ENCODE measurements at regions of chr10 and their contacts with region 1.

Region 1: GRCh38 chr10:73246783-73247508 is at the start of gene DNAJC9:
- DNase-seq: peak; percentile 100
- ATAC-seq: peak; percentile 84
- H3K4me3 ChIP-seq: peak within 1 kb of the TSS; percentile 69
- H3K27ac ChIP-seq: peak within 1 kb of the TSS; percentile 80
- H3K4me1 ChIP-seq: peaks cover 50% of the 10 kb centered on the region
- H3K27me3 ChIP-seq: no peaks in the 10 kb centered on the region
- CTCF ChIP-seq: peak; percentile 56
- total RNA-seq, gene DNAJC9: 282 and 283 TPM in 2 replicates

Region 2: DNA sequence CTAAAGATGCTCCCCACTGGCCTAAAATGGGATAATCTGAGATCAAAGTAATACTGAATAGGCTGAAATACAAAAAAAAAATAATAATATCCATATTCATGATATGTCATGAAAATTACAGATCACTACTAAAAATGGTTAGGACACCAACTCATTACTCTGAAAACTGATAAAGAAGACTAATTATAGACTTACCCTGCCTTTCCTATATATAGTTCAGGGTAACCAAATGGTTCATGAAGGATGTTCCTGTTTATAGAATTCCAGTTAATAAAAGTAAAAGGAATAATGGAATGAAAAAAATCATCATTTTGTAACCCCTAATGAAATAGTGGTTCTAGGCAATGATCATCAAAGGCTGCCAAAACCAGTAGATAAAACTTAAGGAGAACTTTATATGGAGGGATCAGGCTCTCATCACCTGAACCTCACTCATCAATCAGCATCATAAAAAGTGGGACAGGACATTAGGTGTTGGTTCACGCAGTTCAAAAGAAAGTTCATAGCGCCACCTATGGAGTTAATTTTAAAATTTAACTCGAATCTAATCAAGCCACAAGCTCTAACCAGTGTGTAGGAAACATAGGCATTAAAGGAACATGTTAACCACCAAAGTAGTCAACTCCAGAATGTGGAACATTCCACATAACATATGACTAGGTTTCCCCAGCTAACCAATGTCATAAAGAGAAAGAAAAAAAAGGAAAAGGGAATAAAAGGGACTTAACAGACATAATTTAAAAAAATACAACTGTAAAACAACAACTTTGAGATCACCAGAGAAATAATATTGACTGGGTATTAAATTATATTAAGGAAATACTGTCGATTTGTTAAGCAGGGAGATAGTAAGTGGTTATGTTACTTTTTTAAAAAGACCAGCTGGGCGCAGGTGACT is 186.0 kb before region 1 on chr10:
- CTCF ChIA-PET with region 1: no interaction called
- POLR2A ChIA-PET with region 1: no interaction called
- intact Hi-C with region 1: no loop called
- DNase-seq: peak; percentile 98
- ATAC-seq: peak; percentile 95
- H3K4me3 ChIP-seq: no peak overlapping the region
- H3K27ac ChIP-seq: no peak overlapping the region
- H3K4me1 ChIP-seq: no peaks in the 10 kb centered on the region
- H3K27me3 ChIP-seq: no peaks in the 10 kb centered on the region
- CTCF ChIP-seq: peak; percentile 100

Region 3: GRCh38 chr10:73110345-73110849 is 136.5 kb before region 1 on chr10 and contains the start of gene NUDT13:
- CTCF ChIA-PET with region 1: no interaction called
- POLR2A ChIA-PET with region 1: interaction called, 11 read pairs
- intact Hi-C with region 1: no loop called
- DNase-seq: peak; percentile 72
- ATAC-seq: peak; percentile 63
- H3K4me3 ChIP-seq: peak within 1 kb of the TSS; percentile 54
- H3K27ac ChIP-seq: peak within 1 kb of the TSS; percentile 68
- H3K4me1 ChIP-seq: peaks cover 30% of the 10 kb centered on the region
- H3K27me3 ChIP-seq: no peaks in the 10 kb centered on the region
- CTCF ChIP-seq: no peak
- total RNA-seq, gene NUDT13: 1.1 and 1.8 TPM in 2 replicates

Region 4: GRCh38 chr10:73167783-73168464 is 79.0 kb before region 1 on chr10 and contains the starts of genes ECD and FAM149B1:
- CTCF ChIA-PET with region 1: no interaction called
- POLR2A ChIA-PET with region 1: interaction called, 12 read pairs
- intact Hi-C with region 1: loop called (anchors 1 kb)
- DNase-seq: peak; percentile 100
- ATAC-seq: peak; percentile 93
- H3K4me3 ChIP-seq: peak within 1 kb of the TSS; percentile 76
- H3K27ac ChIP-seq: peak within 1 kb of the TSS; percentile 51
- H3K4me1 ChIP-seq: peaks cover 21% of the 10 kb centered on the region
- H3K27me3 ChIP-seq: no peaks in the 10 kb centered on the region
- CTCF ChIP-seq: peak; percentile 49; the same call in 1 of the 2 replicates
- total RNA-seq, gene ECD: 103 and 108 TPM in 2 replicates
- total RNA-seq, gene FAM149B1: 34.3 and 39.1 TPM in 2 replicates

Region 5: GRCh38 chr10:73358331-73359279 is 111.7 kb after region 1 on chr10 and contains the start of gene CFAP70:
- CTCF ChIA-PET with region 1: no interaction called
- POLR2A ChIA-PET with region 1: interaction called, 9 read pairs
- intact Hi-C with region 1: loop called (anchors 2 kb)
- DNase-seq: peak; percentile 100
- ATAC-seq: peak; percentile 93
- H3K4me3 ChIP-seq: peak within 1 kb of the TSS; percentile 66
- H3K27ac ChIP-seq: no peak within 1 kb of the TSS
- H3K4me1 ChIP-seq: peaks cover 16% of the 10 kb centered on the region
- H3K27me3 ChIP-seq: peaks cover 9% of the 10 kb centered on the region
- CTCF ChIP-seq: no peak
- total RNA-seq, gene CFAP70: 0.73 and 0.92 TPM in 2 replicates